SK-N-SH (cell line): ENCODE measurements at regions of chr2 and their contacts with region 1.

Region 1: GRCh38 chr2:135913727-135914365 is 37.6 kb upstream of the MCM6 start:
- DNase-seq: peak; percentile 21
- H3K4me3 ChIP-seq: no peak overlapping the region
- H3K27ac ChIP-seq: no peak overlapping the region
- H3K4me1 ChIP-seq: no peaks in the 10 kb centered on the region; a peak in 1 of 4 replicates
- H3K27me3 ChIP-seq: no peaks in the 10 kb centered on the region
- CTCF ChIP-seq: peak; percentile 88
- EP300 ChIP-seq: no peak
- RAD21 ChIP-seq: peak; percentile 73

Region 2: DNA sequence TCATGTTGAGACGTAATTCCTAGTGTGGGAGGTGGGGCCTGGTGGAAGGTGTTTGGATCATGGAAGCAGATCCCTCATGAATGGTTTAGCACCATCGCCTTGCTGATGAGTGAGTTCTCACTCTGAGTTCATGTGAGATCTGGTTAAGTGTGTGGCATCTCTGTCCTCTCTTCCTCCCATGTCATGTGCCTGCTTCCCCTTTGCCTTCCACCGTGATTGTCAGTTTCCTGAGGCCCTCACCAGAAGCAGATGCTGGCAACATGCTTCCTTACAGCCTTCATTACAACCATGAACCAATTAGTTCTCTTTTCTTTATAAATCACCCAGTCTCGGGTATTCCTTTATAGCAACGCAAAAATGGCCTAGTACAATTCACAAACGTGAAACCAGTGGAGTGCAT is 23.0 kb before region 1 on chr2:
- CTCF ChIA-PET with region 1: no interaction called
- POLR2A ChIA-PET with region 1: no interaction called
- DNase-seq: no peak
- H3K4me3 ChIP-seq: no peak overlapping the region
- H3K27ac ChIP-seq: no peak overlapping the region
- H3K4me1 ChIP-seq: no peaks in the 10 kb centered on the region
- H3K27me3 ChIP-seq: no peaks in the 10 kb centered on the region
- CTCF ChIP-seq: no peak
- EP300 ChIP-seq: no peak
- RAD21 ChIP-seq: no peak

Region 3: DNA sequence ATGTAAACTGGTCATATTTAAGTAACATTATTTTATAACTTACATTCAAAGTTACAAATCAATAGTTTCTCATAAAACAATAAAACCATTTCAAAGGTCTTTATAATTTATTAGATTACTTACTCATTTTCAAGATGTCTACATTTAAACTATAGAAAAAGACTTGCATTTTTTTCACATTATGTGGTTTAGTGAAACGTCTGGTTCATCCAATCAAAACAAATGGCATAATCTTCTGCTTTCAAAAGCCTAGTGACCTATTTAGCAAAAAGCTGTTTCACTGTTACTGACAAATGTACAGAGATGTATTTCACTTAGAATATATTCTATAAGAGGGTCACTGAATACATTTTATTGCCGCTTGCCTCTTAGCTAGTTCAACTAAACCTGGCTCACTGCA is 11.7 kb after region 1 on chr2:
- CTCF ChIA-PET with region 1: interaction called, 11 read pairs
- POLR2A ChIA-PET with region 1: no interaction called
- DNase-seq: no peak
- H3K4me3 ChIP-seq: no peak overlapping the region
- H3K27ac ChIP-seq: no peak overlapping the region
- H3K4me1 ChIP-seq: peaks cover 0 to 5% of the 10 kb centered on the region in 2 experiments; a peak in 1 of 4 replicates
- H3K27me3 ChIP-seq: no peaks in the 10 kb centered on the region
- CTCF ChIP-seq: no peak
- EP300 ChIP-seq: no peak
- RAD21 ChIP-seq: no peak

Region 4: GRCh38 chr2:136384531-136385303 is 470.9 kb after region 1 on chr2:
- CTCF ChIA-PET with region 1: interaction called, 158 read pairs
- POLR2A ChIA-PET with region 1: no interaction called
- DNase-seq: peak; percentile 45
- H3K4me3 ChIP-seq: no peak overlapping the region
- H3K27ac ChIP-seq: no peak overlapping the region
- H3K4me1 ChIP-seq: no peaks in the 10 kb centered on the region; a peak in 1 of 4 replicates
- H3K27me3 ChIP-seq: no peaks in the 10 kb centered on the region
- CTCF ChIP-seq: peak; percentile 45
- EP300 ChIP-seq: no peak
- RAD21 ChIP-seq: peak; percentile 83